ENCODE measurements at regions of chr11 and their contacts with region 1.

Region 1: GRCh38 chr11:44621140-44621681 is 55.7 kb downstream of the CD82 start:
- DNase-seq: peak; percentile 70
- H3K4me3 Mint-ChIP-seq: no peak overlapping the region
- H3K27ac Mint-ChIP-seq: no peak overlapping the region
- H3K4me1 Mint-ChIP-seq: no peaks in the 10 kb centered on the region
- H3K27me3 Mint-ChIP-seq: no peaks in the 10 kb centered on the region
- CTCF ChIP-seq: peak; percentile 98

Region 2: DNA sequence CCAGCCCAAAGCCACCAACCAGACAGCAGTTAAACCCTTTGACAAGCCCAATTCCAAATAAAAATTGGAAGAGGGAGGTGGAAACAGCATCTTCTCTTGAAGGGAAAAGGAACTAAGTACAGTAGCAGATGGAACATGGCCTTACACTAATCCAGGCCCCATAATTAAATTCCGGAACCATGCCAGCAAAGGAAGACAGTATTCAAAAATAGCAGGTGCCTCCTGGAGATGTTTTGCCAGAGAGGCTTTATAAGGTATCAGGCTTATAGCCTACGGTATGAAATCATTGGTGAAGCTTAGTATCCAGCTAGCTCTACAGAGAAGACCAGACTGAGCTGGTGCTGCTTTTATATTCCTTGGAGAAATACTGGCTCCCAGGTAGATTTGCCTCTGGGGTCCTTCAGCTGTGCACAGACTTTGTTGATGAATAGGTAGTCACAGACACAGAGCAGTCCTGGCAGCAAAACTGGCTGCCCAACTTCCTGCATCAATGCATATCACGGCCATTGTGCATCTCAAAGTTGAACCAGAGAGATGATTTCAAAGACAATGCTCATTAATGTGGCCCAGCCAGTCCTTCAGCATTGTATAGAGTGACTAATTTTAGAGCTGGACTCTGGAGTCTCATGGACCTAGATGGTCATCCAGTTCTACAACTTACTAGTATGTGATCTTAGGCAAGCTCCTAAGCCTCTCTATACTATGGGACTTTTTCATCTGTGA is 1653.4 kb before region 1 on chr11:
- CTCF ChIA-PET with region 1: no interaction called
- POLR2A ChIA-PET with region 1: no interaction called
- intact Hi-C with region 1: no loop called
- DNase-seq: no peak
- H3K4me3 Mint-ChIP-seq: no peak overlapping the region
- H3K27ac Mint-ChIP-seq: no peak overlapping the region
- H3K4me1 Mint-ChIP-seq: no peaks in the 10 kb centered on the region
- H3K27me3 Mint-ChIP-seq: no peaks in the 10 kb centered on the region
- CTCF ChIP-seq: no peak

Region 3: DNA sequence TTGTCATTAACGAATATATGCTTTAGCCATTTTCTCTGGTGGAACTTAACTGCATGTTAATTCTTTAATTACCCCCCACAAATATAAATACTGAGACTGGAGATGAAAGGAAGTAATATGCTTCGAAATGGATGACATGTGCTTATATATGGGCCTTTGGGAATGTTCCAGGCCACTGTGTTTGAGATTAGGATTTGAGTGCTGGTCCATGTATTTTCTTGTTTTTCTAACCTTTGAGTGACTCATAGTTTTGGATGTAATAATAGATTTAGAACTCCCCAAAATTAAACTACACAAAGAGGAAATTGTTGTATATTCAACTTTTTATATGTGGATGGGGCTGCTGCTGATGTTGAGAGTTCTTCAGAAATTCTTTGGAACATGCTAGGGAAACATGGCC is 471.6 kb before region 1 on chr11:
- CTCF ChIA-PET with region 1: no interaction called
- POLR2A ChIA-PET with region 1: no interaction called
- intact Hi-C with region 1: no loop called
- DNase-seq: peak; percentile 5
- H3K4me3 Mint-ChIP-seq: no peak overlapping the region
- H3K27ac Mint-ChIP-seq: no peak overlapping the region
- H3K4me1 Mint-ChIP-seq: peaks cover 10% of the 10 kb centered on the region
- H3K27me3 Mint-ChIP-seq: no peaks in the 10 kb centered on the region
- CTCF ChIP-seq: no peak

Region 4: DNA sequence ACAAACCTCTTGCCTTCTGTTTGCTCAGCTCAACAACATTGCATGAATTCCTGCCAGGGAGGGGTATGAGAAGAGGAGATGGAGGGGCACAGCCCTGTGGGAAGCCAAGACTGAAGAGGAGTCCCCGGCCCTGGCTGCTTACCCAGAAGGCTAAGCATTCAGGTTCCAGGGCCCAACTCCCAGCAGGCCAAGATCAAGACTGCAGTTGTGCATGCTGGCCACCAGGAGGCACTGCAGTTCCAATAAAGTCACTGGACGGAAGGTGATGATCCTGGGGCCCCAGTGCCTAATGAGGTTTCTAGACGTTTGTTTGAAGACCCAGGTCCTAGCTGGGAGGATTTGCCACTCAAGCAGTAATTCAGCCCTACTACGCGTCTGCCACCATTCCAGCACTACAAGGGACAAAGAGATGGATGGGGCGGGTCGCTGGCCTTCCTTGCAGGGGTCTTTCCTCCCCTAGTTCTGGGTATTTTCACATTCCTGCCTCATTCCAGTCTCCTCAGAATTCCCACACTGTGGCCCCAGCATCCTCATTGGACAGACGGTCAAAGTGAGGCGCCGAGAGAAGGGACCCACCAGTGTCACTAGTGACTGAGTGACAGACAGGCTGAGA is 334.8 kb before region 1 on chr11:
- CTCF ChIA-PET with region 1: interaction called, 4 read pairs
- POLR2A ChIA-PET with region 1: no interaction called
- intact Hi-C with region 1: loop called (anchors 5 kb)
- DNase-seq: peak; percentile 69
- H3K4me3 Mint-ChIP-seq: no peak overlapping the region
- H3K27ac Mint-ChIP-seq: no peak overlapping the region
- H3K4me1 Mint-ChIP-seq: peaks cover 10% of the 10 kb centered on the region
- H3K27me3 Mint-ChIP-seq: peaks cover 15% of the 10 kb centered on the region
- CTCF ChIP-seq: peak; percentile 95

Region 5: GRCh38 chr11:44565211-44565952 is 55.8 kb before region 1 on chr11 and contains the start of gene CD82:
- CTCF ChIA-PET with region 1: interaction called, 16 read pairs
- POLR2A ChIA-PET with region 1: interaction called, 15 read pairs
- intact Hi-C with region 1: loop called (anchors 2 kb)
- DNase-seq: peak; percentile 99
- H3K4me3 Mint-ChIP-seq: peak within 1 kb of the TSS; percentile 77
- H3K27ac Mint-ChIP-seq: peak within 1 kb of the TSS; percentile 98
- H3K4me1 Mint-ChIP-seq: peaks cover 64% of the 10 kb centered on the region
- H3K27me3 Mint-ChIP-seq: no peaks in the 10 kb centered on the region
- CTCF ChIP-seq: peak; percentile 20
- total RNA-seq, gene CD82: 50.9 and 114 TPM in 2 replicates

Region 6: DNA sequence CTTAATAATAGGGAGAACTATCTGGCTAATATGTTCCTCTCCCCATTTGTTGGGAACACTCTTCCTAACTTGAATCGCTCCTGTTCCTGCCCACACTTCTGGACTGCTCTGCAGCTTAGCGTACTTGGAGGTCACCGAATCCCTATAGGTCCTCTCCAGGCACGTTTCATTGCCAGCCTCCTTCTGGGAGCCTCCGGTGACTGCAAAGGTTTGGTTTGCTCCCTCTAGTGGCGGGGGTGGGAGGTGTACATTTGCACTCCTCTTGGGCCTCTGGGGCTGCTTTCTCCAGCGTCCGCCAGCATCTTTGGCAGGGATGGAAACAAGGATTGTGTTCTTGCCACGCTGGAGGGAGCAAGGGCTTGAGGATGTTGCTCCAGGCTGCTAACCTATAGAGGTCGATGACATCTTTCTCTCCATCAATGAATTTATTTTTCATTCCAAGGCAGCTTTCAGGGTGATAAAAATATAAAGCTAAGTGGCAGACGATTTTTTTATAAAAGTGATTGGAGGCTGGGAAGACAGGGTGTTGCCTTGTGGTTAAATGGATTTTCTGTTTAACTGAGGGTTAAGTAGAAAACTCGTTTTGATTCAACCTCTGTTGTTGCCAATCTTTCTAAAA is 154.3 kb after region 1 on chr11:
- CTCF ChIA-PET with region 1: interaction called, 4 read pairs
- POLR2A ChIA-PET with region 1: no interaction called
- intact Hi-C with region 1: loop called (anchors 1 kb)
- DNase-seq: peak; percentile 74
- H3K4me3 Mint-ChIP-seq: no peak overlapping the region
- H3K27ac Mint-ChIP-seq: no peak overlapping the region
- H3K4me1 Mint-ChIP-seq: peaks cover 14% of the 10 kb centered on the region
- H3K27me3 Mint-ChIP-seq: no peaks in the 10 kb centered on the region
- CTCF ChIP-seq: peak; percentile 70

Region 7: DNA sequence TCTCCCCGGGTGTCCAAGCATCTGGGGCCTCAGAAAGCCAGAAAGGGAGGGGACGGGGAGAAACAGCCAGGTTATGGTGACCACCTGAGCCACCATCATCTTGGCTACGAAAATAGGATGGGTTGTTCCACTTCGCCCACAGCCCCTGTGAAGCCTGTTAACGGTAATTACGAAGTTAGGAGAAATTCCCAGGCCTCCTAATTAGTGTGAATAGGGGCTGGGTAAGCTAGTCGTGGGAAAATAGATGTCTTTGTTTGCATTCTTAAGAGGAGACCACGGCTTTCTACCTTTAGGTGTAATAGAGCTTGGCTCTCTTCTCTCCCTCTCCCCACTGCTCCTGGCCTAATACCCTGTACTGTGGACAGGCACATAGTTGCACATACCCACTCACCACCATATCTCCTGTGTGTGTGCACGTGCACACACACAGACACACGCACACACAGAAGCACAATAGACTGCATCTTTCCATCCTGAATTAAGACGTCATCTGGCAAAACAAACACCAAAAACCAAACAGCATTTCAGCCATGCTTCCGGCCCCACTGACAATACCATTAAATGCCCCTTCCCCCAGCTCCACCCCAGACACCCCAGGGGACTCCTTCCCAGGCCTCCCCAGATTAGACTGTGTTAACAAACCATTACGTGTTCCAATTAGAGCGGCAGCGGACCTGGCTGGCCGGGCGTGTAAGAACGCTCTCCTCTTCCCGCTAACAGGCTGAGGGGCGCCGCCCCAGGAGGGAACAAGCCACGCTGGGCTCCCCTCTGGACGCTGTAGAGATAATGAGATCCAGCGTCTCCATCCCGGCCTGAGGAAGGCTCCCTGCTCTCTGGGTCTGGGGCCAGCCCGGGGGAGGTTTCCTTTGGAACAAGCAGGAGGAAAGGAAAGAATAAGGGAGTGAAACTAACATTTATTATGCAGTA is 256.6 kb after region 1 on chr11:
- CTCF ChIA-PET with region 1: no interaction called
- POLR2A ChIA-PET with region 1: no interaction called
- intact Hi-C with region 1: no loop called
- DNase-seq: no peak
- H3K4me3 Mint-ChIP-seq: no peak overlapping the region
- H3K27ac Mint-ChIP-seq: no peak overlapping the region
- H3K4me1 Mint-ChIP-seq: no peaks in the 10 kb centered on the region
- H3K27me3 Mint-ChIP-seq: peaks cover 16% of the 10 kb centered on the region
- CTCF ChIP-seq: no peak

Region 8: GRCh38 chr11:44893846-44894617 is 272.8 kb after region 1 on chr11:
- CTCF ChIA-PET with region 1: interaction called, 3 read pairs
- POLR2A ChIA-PET with region 1: no interaction called
- intact Hi-C with region 1: loop called (anchors 1 kb)
- DNase-seq: peak; percentile 54
- H3K4me3 Mint-ChIP-seq: no peak overlapping the region
- H3K27ac Mint-ChIP-seq: no peak overlapping the region
- H3K4me1 Mint-ChIP-seq: no peaks in the 10 kb centered on the region
- H3K27me3 Mint-ChIP-seq: peaks cover 35% of the 10 kb centered on the region
- CTCF ChIP-seq: peak; percentile 96